Lower leg skin (tissue), 4 donors: ENCODE measurements at regions of chr4 and their contacts with region 1.

Region 1: DNA sequence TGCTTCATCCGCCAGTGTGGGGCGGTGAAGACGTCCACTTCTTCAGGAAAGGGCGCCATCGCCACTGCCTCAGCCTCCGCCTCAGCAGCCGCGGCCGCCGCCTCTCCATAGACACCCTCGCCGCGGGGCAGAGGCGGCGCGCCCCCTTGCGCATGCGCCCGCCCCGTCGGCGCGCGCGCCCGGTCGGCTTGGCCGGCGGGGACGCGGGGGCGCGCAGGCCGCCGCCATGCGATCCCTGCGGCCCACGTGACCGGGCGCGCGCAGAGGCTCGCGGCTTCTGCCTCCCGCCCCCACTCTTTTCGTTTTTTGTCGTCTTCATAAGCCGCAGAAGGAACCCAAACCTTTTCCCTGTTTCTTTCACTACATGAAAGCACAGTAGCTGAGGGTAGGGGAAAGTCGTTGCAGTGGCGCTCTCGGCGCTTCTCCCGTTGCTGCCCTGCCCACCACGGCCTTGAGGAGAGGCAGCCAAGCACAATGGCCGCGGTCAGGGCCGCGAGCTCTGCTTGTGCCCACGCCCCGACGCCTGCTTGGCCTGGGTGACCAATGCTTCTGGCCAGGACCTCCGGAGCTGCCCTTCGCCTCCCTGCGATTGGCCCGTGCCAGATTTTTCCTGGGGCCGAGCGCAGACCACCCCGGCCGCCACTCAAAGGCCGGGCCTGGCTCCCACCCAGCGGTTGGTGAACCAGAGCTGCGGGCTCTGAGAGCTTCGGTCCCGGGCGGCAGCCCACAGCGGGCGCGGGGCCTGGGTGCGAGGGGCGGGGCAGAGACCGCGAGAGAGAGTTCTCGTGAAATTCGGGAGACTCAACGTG is at the start of gene FBXL5:
- DNase-seq: peak; percentile 66 to 94
- H3K4me3 ChIP-seq: peak within 1 kb of the TSS; percentile 73
- CTCF ChIP-seq: no peak
- POLR2A ChIP-seq: peak in 1 of 2 donors; percentile 51
- total RNA-seq, gene FBXL5: 69.4 to 95.0 (median 80.3) TPM

Region 2: GRCh38 chr4:15001869-15002658 is 653.4 kb before region 1 on chr4 and contains the start of gene CPEB2:
- intact Hi-C with region 1: loop called (anchors 10 kb)
- DNase-seq: peak; percentile 94 to 99
- H3K4me3 ChIP-seq: peak within 1 kb of the TSS; percentile 97
- CTCF ChIP-seq: no peak
- POLR2A ChIP-seq: peak in 1 of 2 donors; percentile 97
- total RNA-seq, gene CPEB2: 45.3 to 61.1 (median 52.8) TPM

Region 3: DNA sequence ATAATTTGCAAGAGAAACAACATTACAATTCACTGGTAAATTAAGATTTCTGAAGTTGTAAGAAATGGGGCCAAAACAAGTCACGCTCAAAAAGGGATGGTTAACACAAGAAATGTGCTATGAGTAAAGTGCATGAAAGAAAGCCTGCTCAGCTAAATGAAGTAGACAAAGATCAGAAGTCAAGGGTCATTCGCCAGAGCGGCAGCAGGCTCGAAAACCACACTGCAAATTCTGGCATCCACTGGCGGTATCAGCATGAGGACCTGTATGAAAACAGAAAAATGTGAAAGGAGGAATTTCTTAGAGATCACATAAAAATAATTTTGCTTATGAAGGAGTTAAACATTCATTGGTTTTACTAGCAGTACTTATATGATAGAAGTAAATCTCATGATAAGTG is 49.9 kb before region 1 on chr4:
- intact Hi-C with region 1: no loop called
- DNase-seq: no peak
- H3K4me3 ChIP-seq: no peak overlapping the region
- CTCF ChIP-seq: no peak
- POLR2A ChIP-seq: no peak